Calu3 (cell line): ENCODE measurements at regions of chr2 and their contacts with region 1.

Region 1: DNA sequence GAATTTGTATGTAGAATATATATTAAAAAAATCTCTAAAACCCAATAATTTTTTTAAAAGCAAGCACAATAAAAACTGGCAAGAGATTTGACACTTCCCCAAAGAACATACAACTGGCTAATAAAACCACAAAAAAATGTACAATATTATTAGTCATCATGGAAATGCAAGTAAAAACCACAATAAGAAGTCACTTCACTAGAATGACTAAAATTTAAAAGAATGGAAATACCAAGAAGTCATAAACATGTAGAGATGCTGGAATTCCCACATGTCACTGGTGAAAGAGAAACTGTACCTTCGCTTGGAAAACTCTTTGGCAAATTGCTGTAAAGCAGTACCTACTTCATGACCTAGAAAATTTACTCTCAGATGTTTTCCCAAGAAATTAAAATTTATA is 43.4 kb upstream of the KYNU start:
- DNase-seq: no peak
- H3K4me3 Mint-ChIP-seq: no peak overlapping the region
- H3K27ac Mint-ChIP-seq: no peak overlapping the region
- H3K4me1 Mint-ChIP-seq: peaks cover 32% of the 10 kb centered on the region
- H3K27me3 Mint-ChIP-seq: no peaks in the 10 kb centered on the region
- CTCF ChIP-seq: no peak

Region 2: DNA sequence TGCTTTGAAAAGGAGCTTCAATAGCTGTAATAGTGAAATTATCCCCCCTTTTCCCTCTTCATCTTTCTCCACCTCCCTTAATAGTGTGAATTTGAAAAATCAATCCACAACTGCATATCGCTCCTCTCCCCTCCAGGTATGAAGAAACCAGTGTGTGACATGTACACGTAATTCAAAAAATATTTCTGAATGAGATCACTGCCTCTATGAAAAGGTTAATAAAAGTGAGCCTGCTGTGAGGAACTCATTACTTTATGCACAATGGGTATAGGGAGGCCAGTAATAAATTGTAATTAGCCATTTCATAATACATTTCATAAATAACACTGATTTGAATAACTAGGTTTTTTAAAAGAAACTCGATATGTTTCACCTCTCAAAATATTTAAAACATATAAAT is 165.6 kb before region 1 on chr2:
- CTCF ChIA-PET with region 1: no interaction called
- intact Hi-C with region 1: no loop called
- DNase-seq: no peak
- H3K4me3 Mint-ChIP-seq: no peak overlapping the region
- H3K27ac Mint-ChIP-seq: no peak overlapping the region
- H3K4me1 Mint-ChIP-seq: peaks cover 15% of the 10 kb centered on the region
- H3K27me3 Mint-ChIP-seq: no peaks in the 10 kb centered on the region
- CTCF ChIP-seq: no peak

Region 3: GRCh38 chr2:142868281-142868762 is 34.3 kb after region 1 on chr2:
- CTCF ChIA-PET with region 1: no interaction called
- intact Hi-C with region 1: loop called (anchors 5 kb)
- DNase-seq: peak; percentile 86
- H3K4me3 Mint-ChIP-seq: peak overlapping the region; percentile 39
- H3K27ac Mint-ChIP-seq: peak overlapping the region; percentile 97
- H3K4me1 Mint-ChIP-seq: peaks cover 73% of the 10 kb centered on the region
- H3K27me3 Mint-ChIP-seq: no peaks in the 10 kb centered on the region
- CTCF ChIP-seq: no peak

Region 4: GRCh38 chr2:142951190-142952007 is 117.4 kb after region 1 on chr2:
- CTCF ChIA-PET with region 1: no interaction called
- intact Hi-C with region 1: no loop called
- DNase-seq: no peak
- H3K4me3 Mint-ChIP-seq: no peak overlapping the region
- H3K27ac Mint-ChIP-seq: no peak overlapping the region
- H3K4me1 Mint-ChIP-seq: peaks cover 51% of the 10 kb centered on the region
- H3K27me3 Mint-ChIP-seq: no peaks in the 10 kb centered on the region
- CTCF ChIP-seq: no peak

Region 5: DNA sequence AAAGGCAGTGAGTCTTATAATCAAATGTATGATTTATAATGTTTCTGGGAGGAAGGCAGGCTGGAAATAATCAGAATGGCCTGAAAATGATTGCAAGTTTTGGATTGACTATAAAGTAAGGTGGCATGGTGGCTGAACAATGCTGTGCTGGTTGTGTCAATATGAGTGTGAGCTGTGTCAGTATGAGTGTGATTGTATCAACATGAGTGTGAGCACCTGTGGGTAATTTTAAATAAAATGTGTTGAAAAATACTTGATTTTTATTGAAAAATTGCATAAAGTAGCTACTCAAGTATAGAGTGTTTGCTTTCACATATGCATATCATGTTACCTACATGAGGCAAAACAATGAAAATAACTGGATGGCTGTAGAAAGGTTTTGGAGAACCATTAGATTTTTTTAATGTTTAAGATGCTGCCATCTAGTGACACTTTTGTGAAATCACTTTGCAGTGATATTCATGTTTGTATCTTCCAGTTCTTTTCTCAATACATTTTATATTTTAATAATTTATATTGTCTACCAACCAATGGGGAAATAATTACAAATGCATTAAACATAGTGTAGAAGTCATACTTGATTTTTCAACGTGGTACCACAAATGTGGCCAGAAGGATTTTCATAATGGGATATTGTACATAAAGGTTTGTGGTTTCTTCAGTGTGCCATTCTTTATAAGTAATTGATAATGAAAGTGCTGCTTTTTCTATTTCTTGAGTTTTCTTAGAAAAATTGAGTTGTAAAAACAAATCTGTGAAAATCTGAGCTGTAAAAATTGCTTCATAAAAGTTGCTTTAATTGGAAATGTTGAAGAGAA is 146.7 kb after region 1 on chr2:
- CTCF ChIA-PET with region 1: no interaction called
- intact Hi-C with region 1: no loop called
- DNase-seq: no peak
- H3K4me3 Mint-ChIP-seq: peak overlapping the region; percentile 31
- H3K27ac Mint-ChIP-seq: peak overlapping the region; percentile 66
- H3K4me1 Mint-ChIP-seq: peaks cover 21% of the 10 kb centered on the region
- H3K27me3 Mint-ChIP-seq: no peaks in the 10 kb centered on the region
- CTCF ChIP-seq: peak; percentile 47